ENCODE measurements at regions of chr19 and their contacts with region 1.

Region 1: DNA sequence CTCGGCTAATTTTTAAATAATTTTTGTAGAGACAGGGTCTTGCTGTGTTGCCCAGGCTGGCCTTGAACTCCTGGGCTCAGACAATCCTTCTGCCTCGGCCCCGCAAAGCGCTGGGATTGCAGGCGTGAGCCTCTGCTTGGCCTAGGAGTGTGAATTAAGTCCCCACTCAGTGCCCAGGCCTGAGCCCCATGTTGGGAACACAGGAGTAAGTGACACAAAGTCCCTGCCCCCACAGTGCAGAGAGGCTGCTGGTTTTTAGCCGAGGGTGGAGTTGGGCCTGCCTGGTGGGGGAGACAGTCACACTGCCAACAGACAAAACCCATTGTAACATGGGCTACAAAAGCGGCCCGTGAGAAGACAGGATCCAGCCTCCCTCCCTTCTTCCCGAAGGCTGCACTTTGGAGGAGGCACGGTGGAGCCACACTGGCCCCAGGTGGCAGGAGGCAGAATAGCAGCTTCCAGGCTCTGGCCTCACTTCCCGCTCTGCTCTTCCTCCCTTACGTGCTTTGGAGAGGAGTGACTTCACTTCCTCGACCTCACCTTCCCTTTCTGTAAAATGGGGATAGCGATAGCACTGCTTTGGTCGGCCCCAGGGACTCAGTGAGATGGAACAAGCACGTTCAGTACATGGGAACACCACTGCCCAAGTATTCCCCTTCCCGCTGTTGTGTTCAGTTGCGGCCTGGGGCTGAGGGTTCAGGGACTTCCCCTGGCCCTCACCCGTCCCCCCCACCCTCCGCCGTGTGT is 15.2 kb upstream of the EHD2 start:
- DNase-seq: peak; percentile 92
- H3K4me3 ChIP-seq: no peak overlapping the region
- H3K27ac ChIP-seq: peak overlapping the region in 1 of 2 experiments; percentile 39; a peak in 2 of 4 replicates
- H3K4me1 ChIP-seq: no peaks in the 10 kb centered on the region; a peak in 1 of 4 replicates
- H3K27me3 ChIP-seq: no peaks in the 10 kb centered on the region
- CTCF ChIP-seq: peak; percentile 93
- EP300 ChIP-seq: no peak
- RAD21 ChIP-seq: peak; percentile 98

Region 2: GRCh38 chr19:47447470-47448359 is 250.3 kb before region 1 on chr19:
- CTCF ChIA-PET with region 1: interaction called, 15 read pairs
- POLR2A ChIA-PET with region 1: no interaction called
- DNase-seq: peak; percentile 97
- H3K4me3 ChIP-seq: peak overlapping the region; percentile 41 to 46; a peak in 3 of 4 replicates
- H3K27ac ChIP-seq: peak overlapping the region in 1 of 2 experiments; percentile 67; a peak in 1 of 4 replicates
- H3K4me1 ChIP-seq: peaks cover 0 to 9% of the 10 kb centered on the region in 2 experiments; a peak in 2 of 4 replicates
- H3K27me3 ChIP-seq: no peaks in the 10 kb centered on the region; the same call in 1 of the 2 replicates
- CTCF ChIP-seq: no peak
- EP300 ChIP-seq: no peak
- RAD21 ChIP-seq: no peak

Region 3: GRCh38 chr19:47494729-47495128 is 203.3 kb before region 1 on chr19:
- CTCF ChIA-PET with region 1: interaction called, 13 read pairs
- POLR2A ChIA-PET with region 1: interaction called, 4 read pairs
- DNase-seq: peak; percentile 98
- H3K4me3 ChIP-seq: no peak overlapping the region
- H3K27ac ChIP-seq: peak overlapping the region in 1 of 2 experiments; percentile 84; a peak in 2 of 4 replicates
- H3K4me1 ChIP-seq: peaks cover 0 to 82% of the 10 kb centered on the region in 2 experiments; a peak in 1 of 4 replicates
- H3K27me3 ChIP-seq: no peaks in the 10 kb centered on the region
- CTCF ChIP-seq: no peak
- EP300 ChIP-seq: peak in 1 of 2 experiments; percentile 65; a peak in 1 of 4 replicates
- RAD21 ChIP-seq: no peak

Region 4: GRCh38 chr19:47514869-47515588 is 183.0 kb before region 1 on chr19 and contains the start of gene NAPA:
- CTCF ChIA-PET with region 1: interaction called, 16 read pairs
- POLR2A ChIA-PET with region 1: no interaction called
- DNase-seq: peak; percentile 99
- H3K4me3 ChIP-seq: peak within 1 kb of the TSS; percentile 91 to 97
- H3K27ac ChIP-seq: peak within 1 kb of the TSS; percentile 81 to 88
- H3K4me1 ChIP-seq: peaks cover 15 to 16% of the 10 kb centered on the region in 2 experiments; a peak in 3 of 4 replicates
- H3K27me3 ChIP-seq: no peaks in the 10 kb centered on the region
- CTCF ChIP-seq: no peak
- EP300 ChIP-seq: peak in 1 of 2 experiments; percentile 60; a peak in 1 of 4 replicates
- RAD21 ChIP-seq: peak; percentile 81
- polyA plus RNA-seq, gene NAPA: 80.0 and 84.1 TPM in 2 replicates

Region 5: GRCh38 chr19:47608969-47609905 is 88.8 kb before region 1 on chr19 and contains the start of gene BICRA:
- CTCF ChIA-PET with region 1: interaction called, 36 read pairs
- POLR2A ChIA-PET with region 1: no interaction called
- DNase-seq: peak; percentile 92
- H3K4me3 ChIP-seq: peak within 1 kb of the TSS; percentile 87 to 99
- H3K27ac ChIP-seq: peak within 1 kb of the TSS; percentile 89 to 93
- H3K4me1 ChIP-seq: peaks cover 27 to 29% of the 10 kb centered on the region in 2 experiments; a peak in 2 of 4 replicates
- H3K27me3 ChIP-seq: no peaks in the 10 kb centered on the region
- CTCF ChIP-seq: no peak
- EP300 ChIP-seq: no peak
- RAD21 ChIP-seq: no peak
- polyA plus RNA-seq, gene BICRA: 0.75 and 1.4 TPM in 2 replicates

Region 6: DNA sequence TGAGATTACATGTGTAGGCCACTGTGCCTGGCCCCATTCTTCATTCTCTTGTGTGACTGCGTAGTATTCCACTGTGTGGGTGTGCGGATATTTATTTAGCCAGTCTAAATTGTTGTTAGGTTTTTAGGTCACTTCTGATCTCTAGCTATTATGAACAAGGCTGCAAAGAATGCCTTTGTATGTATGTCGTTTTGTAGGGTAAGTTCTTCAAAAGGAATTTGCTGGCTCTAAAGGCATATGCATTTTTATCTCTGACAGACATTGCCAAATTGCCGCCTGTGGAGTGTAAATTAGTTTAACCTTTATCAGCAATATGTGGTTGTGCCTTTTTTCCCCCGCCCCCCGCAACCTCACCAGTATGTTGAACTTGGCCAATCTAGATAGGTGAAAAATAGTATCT is 15.1 kb before region 1 on chr19:
- CTCF ChIA-PET with region 1: interaction called, 24 read pairs
- POLR2A ChIA-PET with region 1: no interaction called
- DNase-seq: no peak
- H3K4me3 ChIP-seq: no peak overlapping the region
- H3K27ac ChIP-seq: no peak overlapping the region
- H3K4me1 ChIP-seq: no peaks in the 10 kb centered on the region
- H3K27me3 ChIP-seq: no peaks in the 10 kb centered on the region
- CTCF ChIP-seq: no peak
- EP300 ChIP-seq: no peak
- RAD21 ChIP-seq: no peak

Region 7: GRCh38 chr19:47745010-47745901 is 47.2 kb after region 1 on chr19 and contains the start of gene NOP53:
- CTCF ChIA-PET with region 1: interaction called, 475 read pairs
- POLR2A ChIA-PET with region 1: no interaction called
- DNase-seq: peak; percentile 96
- H3K4me3 ChIP-seq: peak within 1 kb of the TSS; percentile 65 to 83
- H3K27ac ChIP-seq: peak within 1 kb of the TSS; percentile 91 to 97
- H3K4me1 ChIP-seq: peaks cover 12 to 14% of the 10 kb centered on the region in 2 experiments; a peak in 1 of 4 replicates
- H3K27me3 ChIP-seq: no peaks in the 10 kb centered on the region
- CTCF ChIP-seq: no peak
- EP300 ChIP-seq: peak in 1 of 2 experiments; percentile 39; a peak in 1 of 4 replicates
- RAD21 ChIP-seq: no peak
- polyA plus RNA-seq, gene NOP53: 198 and 275 TPM in 2 replicates

Region 8: GRCh38 chr19:47805313-47805712 is 107.3 kb after region 1 on chr19:
- CTCF ChIA-PET with region 1: no interaction called
- POLR2A ChIA-PET with region 1: no interaction called
- DNase-seq: no peak
- H3K4me3 ChIP-seq: no peak overlapping the region
- H3K27ac ChIP-seq: no peak overlapping the region
- H3K4me1 ChIP-seq: no peaks in the 10 kb centered on the region
- H3K27me3 ChIP-seq: peaks cover 13% of the 10 kb centered on the region
- CTCF ChIP-seq: no peak
- EP300 ChIP-seq: no peak
- RAD21 ChIP-seq: no peak

Measured in SK-N-SH (cell line).